ENCODE measurements at regions of chr20 and their contacts with region 1.

Region 1: GRCh38 chr20:1466211-1467081 is at the start of gene NSFL1C:
- DNase-seq: peak; percentile 96 to 97
- ATAC-seq: peak; percentile 80 to 93
- H3K4me3 ChIP-seq: peak within 1 kb of the TSS; percentile 97
- H3K27ac ChIP-seq: peak within 1 kb of the TSS; percentile 95 to 97
- H3K4me1 ChIP-seq: peaks cover 37% of the 10 kb centered on the region
- CTCF ChIP-seq: peak; percentile 97
- EP300 ChIP-seq: no peak
- POLR2A ChIP-seq: peak; percentile 85
- RAD21 ChIP-seq: peak in 1 of 2 experiments; percentile 69; a peak in 4 of 5 replicates
- polyA plus RNA-seq, gene NSFL1C: 53.2 and 56.6 TPM in 2 replicates

Region 2: DNA sequence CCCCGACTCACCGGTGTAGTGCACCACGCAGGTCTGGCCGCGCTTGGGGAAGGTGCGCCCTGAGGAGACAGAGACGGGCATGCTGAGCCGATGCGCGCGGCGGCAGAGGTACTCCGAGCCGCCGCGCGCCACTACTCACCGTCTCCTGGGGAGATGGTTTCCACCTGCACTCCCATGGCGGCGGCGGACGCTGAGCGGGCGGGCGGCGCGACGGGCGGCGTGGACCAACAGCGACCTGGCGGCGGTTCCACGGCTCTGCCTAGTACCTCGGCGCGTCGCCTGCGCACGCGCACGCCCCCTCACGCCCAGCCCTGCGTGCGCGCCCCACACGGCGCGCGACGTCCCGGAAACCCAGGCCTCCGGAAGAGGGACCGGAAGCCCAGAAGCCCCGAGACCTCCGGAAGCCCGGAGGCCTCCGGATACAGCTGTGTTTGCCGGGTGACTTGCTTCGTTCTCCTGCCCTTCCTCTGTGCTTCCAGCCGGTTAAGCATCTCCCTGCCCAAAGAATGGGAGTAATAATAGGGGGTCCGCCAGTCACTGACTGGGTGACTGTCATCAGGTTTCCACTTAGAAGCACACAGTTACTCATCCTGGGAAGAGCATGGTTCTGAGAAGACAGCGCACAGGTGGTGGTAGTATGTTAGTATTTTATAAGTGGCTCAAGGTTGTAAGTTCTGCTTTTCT is 73.5 kb before region 1 on chr20 and contains the start of gene FKBP1A:
- CTCF ChIA-PET with region 1: interaction called, 10 read pairs
- POLR2A ChIA-PET with region 1: no interaction called
- DNase-seq: peak; percentile 91
- ATAC-seq: peak; percentile 96 to 98
- H3K4me3 ChIP-seq: peak within 1 kb of the TSS; percentile 96
- H3K27ac ChIP-seq: peak within 1 kb of the TSS; percentile 89 to 95
- H3K4me1 ChIP-seq: peaks cover 27% of the 10 kb centered on the region; the same call in 2 of the 3 replicates
- CTCF ChIP-seq: no peak
- EP300 ChIP-seq: no peak
- POLR2A ChIP-seq: peak; percentile 91
- RAD21 ChIP-seq: 0 out of 5 replicates have a peak, but pooled peaks of 1 of the 2 experiments have one; percentile 8
- polyA plus RNA-seq, gene FKBP1A: 535 and 848 TPM in 2 replicates

Region 3: GRCh38 chr20:1450926-1451491 is 15.4 kb before region 1 on chr20:
- CTCF ChIA-PET with region 1: interaction called, 24 read pairs
- POLR2A ChIA-PET with region 1: no interaction called
- DNase-seq: no peak
- ATAC-seq: no peak
- H3K4me3 ChIP-seq: no peak overlapping the region
- H3K27ac ChIP-seq: no peak overlapping the region
- H3K4me1 ChIP-seq: no peaks in the 10 kb centered on the region
- CTCF ChIP-seq: no peak
- EP300 ChIP-seq: no peak
- POLR2A ChIP-seq: no peak
- RAD21 ChIP-seq: no peak

Region 4: GRCh38 chr20:1456300-1456699 is 10.1 kb before region 1 on chr20:
- CTCF ChIA-PET with region 1: interaction called, 23 read pairs
- POLR2A ChIA-PET with region 1: no interaction called
- DNase-seq: no peak
- ATAC-seq: no peak
- H3K4me3 ChIP-seq: no peak overlapping the region
- H3K27ac ChIP-seq: no peak overlapping the region
- H3K4me1 ChIP-seq: no peaks in the 10 kb centered on the region
- CTCF ChIP-seq: no peak
- EP300 ChIP-seq: no peak
- POLR2A ChIP-seq: no peak
- RAD21 ChIP-seq: no peak

Region 5: DNA sequence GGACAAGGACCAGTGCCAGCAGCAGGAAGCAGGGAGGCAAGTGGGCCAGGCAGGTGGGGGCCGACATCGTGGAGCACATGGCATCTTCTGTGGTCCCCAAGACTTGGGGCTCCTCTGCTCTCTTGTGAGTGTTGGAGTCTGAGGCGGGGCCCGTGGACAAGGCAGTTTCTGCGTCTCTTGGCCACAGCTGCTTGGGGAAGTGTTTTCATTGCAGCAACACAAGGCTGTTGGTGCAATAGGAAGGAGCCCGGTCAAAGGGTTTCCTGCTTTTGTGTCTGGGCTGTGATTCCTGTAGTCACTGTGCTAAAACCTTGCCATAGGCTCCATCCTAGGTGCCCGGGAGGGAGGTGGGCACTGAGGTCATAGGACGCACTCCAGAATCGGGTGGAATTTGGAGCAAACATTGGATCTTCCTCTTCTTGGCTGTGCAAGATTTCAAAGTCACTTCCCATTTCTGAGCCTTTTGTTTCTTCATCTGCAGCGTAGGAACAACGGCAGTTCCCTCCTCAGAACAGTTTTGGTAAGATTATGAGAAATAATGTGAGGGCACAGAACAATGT is 24.9 kb after region 1 on chr20 and contains the start of gene SIRPB2:
- CTCF ChIA-PET with region 1: interaction called, 14 read pairs
- POLR2A ChIA-PET with region 1: no interaction called
- DNase-seq: no peak
- ATAC-seq: no peak
- H3K4me3 ChIP-seq: no peak within 1 kb of the TSS
- H3K27ac ChIP-seq: no peak within 1 kb of the TSS
- H3K4me1 ChIP-seq: 0 out of 3 replicates have a peak, but pooled peaks cover 3% of the 10 kb centered on the region
- CTCF ChIP-seq: no peak
- EP300 ChIP-seq: no peak
- POLR2A ChIP-seq: no peak
- RAD21 ChIP-seq: no peak
- polyA plus RNA-seq, gene SIRPB2: not detected in 2 replicates

Region 6: DNA sequence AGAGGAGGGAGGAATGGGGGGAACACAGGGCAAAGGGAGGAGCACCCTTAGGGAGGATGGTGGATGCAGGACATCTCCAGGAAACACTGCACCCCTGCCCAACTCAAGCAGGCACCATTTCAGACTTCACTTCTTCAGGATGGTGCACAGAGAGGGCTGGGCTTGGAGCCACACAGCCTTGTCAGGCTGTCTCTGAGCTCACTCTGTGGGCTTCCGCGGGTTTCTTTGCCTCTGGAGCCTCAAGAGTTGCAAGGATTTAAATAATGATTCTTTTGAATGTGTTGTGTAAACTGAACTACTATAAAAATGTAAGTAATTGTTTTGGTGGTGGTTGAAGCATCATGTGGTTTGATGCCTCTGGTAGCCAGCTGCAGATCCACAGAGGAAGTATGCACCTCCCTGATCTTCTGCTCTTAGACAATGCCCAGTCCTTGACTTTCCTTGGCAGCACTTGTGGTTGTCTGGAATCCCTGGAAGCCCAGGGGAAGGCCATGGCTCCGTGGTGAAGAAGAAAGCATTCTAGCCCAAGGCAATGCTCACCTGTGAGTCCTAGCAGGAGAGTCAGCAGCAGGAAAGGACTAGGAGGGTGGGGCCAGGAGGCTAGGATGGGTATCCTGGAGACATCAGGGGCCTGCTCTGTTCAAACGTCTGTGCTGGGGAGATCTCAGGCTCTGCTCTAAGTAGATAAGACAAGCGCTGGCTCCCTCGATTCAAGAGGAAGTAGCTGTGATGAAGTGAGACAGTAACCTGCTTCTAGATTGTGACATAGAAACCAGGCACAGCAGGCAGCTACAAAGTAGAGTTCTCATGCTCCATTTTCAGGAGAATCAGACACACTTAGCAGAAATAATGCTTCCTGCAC is 241.4 kb after region 1 on chr20:
- CTCF ChIA-PET with region 1: no interaction called
- POLR2A ChIA-PET with region 1: no interaction called
- DNase-seq: no peak
- ATAC-seq: no peak
- H3K4me3 ChIP-seq: no peak overlapping the region
- H3K27ac ChIP-seq: no peak overlapping the region
- H3K4me1 ChIP-seq: no peaks in the 10 kb centered on the region
- CTCF ChIP-seq: no peak
- EP300 ChIP-seq: no peak
- POLR2A ChIP-seq: no peak
- RAD21 ChIP-seq: no peak

Measured in A549 (cell line).